Thyroid gland (tissue), 4 donors: ENCODE measurements at regions of chr11 and their contacts with region 1.

Region 1: DNA sequence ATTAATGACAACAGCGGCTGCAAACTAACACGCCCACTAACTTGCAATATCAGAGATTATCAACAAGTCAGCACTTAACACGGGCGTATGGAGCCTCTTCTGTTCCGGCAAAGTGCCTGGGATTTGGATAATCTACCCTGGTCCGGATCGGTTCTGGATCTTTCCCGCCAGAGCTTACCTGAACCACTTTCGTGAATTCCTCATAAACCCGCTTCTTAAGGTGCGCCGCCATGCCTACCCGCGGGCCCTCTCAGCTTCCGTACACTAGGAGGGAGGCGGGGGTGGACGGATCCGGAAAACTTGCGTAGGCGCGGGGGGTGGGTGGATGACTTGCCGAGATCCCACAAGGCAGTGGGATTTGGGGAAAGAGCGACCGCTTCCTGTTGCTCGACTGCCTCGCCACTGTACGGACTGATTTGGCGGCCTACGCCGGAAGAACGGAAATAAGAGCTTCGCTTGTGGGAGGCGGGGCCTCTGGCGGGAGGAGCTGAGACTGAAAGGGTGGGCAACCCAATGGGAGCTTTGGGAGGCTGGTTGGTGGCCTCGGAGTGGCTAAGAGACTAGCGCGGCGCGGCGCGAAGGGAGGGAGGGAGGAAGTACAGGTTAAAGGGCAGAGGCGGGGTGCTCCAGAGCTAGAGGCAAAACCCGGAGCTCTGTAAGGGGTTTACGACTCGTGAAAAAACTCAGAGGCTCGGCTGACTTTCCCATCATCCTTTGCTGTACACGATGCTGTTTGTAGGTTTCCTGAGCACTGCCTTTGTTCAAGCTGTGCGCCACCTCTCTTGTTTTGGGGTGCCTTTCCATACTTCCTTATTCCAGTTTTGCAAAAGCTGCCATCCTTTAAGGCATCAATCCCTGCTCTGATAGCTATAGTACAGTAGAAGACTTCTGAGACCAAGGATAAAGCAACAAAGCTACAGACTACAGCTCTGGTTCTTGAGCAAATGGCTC is at the start of gene INTS4:
- DNase-seq: peak; percentile 99
- H3K4me3 ChIP-seq: peak within 1 kb of the TSS; percentile 34 to 56 (median 49)
- H3K27ac ChIP-seq: peak within 1 kb of the TSS; percentile 63 to 84 (median 68)
- H3K4me1 ChIP-seq: peaks cover 9 to 14% of the 10 kb centered on the region in 2 donors
- H3K27me3 ChIP-seq: no peaks in the 10 kb centered on the region
- CTCF ChIP-seq: no peak
- POLR2A ChIP-seq: peak in 1 of 2 donors; percentile 49
- total RNA-seq, gene INTS4: 31.9 to 53.8 (median 43.7) TPM

Region 2: DNA sequence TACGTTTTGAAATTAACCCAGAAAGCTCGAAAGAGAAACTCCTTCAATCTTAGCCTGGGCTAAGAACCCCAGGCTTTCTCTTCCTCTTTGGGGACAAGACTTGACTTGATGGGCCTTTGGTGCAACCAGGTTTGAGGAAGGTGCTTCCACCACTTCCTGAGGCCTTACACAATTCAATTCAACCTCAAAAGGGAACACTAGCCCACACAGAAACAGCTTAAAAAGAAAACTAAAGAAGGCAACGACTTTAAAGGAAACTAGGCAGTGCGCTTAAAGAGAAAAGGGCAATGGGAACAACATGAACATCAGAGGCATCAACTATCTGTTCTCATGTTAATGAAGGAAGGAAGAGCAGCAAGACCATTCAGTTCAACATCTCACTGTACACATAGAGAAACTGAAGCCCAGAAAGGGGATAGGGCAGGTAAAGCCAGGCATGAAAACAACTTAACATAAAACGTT is 545.6 kb before region 1 on chr11:
- intact Hi-C with region 1: no loop called
- DNase-seq: no peak
- H3K4me3 ChIP-seq: no peak overlapping the region
- H3K27ac ChIP-seq: peak overlapping the region in 2 of 3 donors; percentile 4 to 27
- H3K4me1 ChIP-seq: peaks cover 29 to 33% of the 10 kb centered on the region in 2 donors
- H3K27me3 ChIP-seq: no peaks in the 10 kb centered on the region
- CTCF ChIP-seq: no peak
- POLR2A ChIP-seq: no peak

Region 3: DNA sequence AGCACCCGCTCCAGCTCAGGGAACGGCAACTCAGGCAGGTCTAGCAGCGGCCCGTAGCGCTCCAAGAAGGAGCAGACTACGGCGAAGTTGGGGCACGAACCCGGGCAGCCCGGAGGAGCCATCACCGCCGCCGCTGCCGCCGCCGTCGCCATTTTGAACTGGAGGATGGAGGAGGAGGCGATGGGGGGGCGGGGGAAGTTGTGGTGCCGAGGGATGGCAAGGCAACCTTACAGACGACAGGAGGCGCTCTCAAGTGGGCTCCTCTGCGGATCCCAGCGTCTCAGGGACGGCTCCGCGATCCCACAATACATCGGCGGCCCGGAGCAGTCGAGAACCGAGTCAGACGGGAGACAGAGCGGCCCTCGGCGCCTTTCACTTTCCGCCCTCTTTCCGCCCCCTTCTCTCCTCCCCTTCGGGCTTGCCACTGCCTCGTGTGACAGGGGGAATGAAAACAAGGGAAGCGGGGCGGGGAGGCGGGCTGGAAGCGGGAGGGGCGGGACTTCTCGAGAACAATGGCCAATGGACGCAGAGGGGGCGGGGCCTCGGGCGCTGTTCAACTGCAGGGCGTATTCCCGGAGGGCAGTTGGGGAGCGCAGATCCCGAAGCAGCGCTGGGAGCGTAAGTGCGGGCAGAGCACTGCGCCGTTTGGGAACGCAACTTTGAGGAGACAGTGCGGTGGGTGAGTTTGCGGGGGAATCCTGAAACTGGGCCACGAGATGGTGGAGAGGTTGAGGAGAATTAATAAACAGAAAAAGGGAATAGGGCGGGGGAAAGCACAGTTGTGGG is 173.9 kb before region 1 on chr11 and contains the starts of genes AAMDC and RSF1:
- intact Hi-C with region 1: loop called (anchors 5 kb)
- DNase-seq: peak; percentile 99
- H3K4me3 ChIP-seq: peak within 1 kb of the TSS; percentile 69 to 99 (median 99)
- H3K27ac ChIP-seq: peak within 1 kb of the TSS; percentile 95 to 98 (median 96)
- H3K4me1 ChIP-seq: peaks cover 10 to 35% of the 10 kb centered on the region in 2 donors
- H3K27me3 ChIP-seq: no peaks in the 10 kb centered on the region
- CTCF ChIP-seq: peak in 5 of 6 experiments; percentile 31 to 74 (median 55)
- POLR2A ChIP-seq: peak; percentile 27 to 94
- total RNA-seq, gene AAMDC: 33.6 to 60.5 (median 39.0) TPM
- total RNA-seq, gene RSF1: 55.0 to 88.8 (median 65.8) TPM

Region 4: DNA sequence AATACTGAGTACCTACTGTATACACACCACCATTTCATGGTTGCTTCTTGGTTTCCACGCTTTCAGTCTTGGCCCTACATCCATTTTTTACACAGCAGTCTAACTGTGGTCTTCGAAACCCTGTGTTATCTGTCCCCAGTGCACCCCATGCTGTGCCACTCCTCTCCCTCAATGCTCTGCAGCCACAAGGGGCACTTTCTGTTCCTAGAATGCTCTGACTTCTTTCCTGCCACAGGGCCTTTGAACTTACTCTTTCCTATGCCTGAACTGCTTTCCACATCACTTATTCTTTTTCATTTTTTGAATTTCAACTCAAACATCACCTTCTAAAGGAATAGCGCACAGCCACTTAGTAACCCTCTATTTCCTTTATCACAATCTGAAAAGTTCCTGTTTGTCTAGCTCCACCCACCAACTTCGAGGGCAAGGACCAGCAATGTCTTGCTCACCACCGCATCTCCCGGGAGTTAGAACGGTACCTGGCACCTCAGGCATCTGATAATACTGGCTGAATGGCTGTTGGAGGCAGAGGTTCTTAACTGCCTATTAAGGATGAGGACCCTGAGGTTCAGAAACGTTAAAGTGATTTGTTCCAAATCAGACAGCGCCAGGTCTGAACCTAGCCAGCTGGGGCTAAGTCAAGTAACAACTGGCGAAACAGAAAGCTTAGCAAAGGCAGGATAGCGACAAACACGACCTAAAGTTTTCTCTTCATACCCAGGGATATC is 144.2 kb after region 1 on chr11:
- intact Hi-C with region 1: no loop called
- DNase-seq: peak in 1 of 2 donors; percentile 9
- H3K4me3 ChIP-seq: peak overlapping the region; percentile 33 to 72 (median 55)
- H3K27ac ChIP-seq: peak overlapping the region in 2 of 3 donors; percentile 2 to 58
- H3K4me1 ChIP-seq: peaks cover 3 to 13% of the 10 kb centered on the region in 2 donors
- H3K27me3 ChIP-seq: no peaks in the 10 kb centered on the region
- CTCF ChIP-seq: no peak
- POLR2A ChIP-seq: no peak